ENCODE measurements at regions of chr6 and their contacts with region 1.

Region 1: DNA sequence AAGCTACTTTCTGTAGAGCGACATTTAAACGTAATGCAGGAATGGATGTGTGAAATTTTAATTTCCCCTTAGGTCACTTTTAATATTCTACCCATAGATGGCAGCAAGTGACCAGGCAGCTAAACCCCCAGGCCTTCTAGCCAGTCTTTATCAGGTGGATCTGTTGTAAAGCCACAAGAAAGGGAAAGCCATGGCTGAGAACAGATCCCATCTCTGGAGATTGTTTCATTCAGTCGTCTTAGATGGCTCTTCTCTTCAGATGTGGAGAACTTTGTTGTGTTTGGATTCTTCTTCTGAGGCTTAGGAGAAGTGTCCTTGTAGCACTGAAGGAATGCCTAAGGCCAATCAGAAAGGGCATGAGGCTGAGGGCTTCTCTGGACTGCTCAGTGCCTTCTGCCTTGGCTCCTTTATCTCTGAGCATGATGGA is 15.8 kb upstream of the RNF182 start:
- DNase-seq: peak; percentile 88
- H3K4me3 ChIP-seq: no peak overlapping the region
- H3K27ac ChIP-seq: peak overlapping the region; percentile 82
- H3K4me1 ChIP-seq: peaks cover 37% of the 10 kb centered on the region
- H3K27me3 ChIP-seq: no peaks in the 10 kb centered on the region
- CTCF ChIP-seq: peak; percentile 78

Region 2: DNA sequence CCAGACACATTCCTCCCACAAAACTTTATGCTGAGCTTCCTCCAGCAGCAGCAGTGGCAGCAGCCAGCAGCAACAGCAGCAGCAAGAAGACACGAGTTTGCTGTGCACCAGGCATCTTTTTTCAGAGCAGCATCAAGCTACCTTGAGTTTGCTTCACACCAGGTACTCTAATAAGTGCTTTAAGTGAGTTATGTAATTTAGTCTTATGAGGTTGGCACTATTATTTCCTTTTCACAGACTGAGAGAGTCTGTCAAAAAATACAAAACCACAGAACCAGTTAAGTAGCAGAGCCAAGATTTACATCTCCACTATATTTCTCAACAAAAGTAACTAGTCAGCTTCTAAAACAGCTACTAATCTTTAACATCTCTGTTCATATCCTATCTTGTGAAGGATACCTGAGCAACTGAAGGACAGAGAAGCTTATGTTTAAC is 221.0 kb before region 1 on chr6:
- CTCF ChIA-PET with region 1: no interaction called
- POLR2A ChIA-PET with region 1: no interaction called
- intact Hi-C with region 1: no loop called
- DNase-seq: no peak
- H3K4me3 ChIP-seq: no peak overlapping the region
- H3K27ac ChIP-seq: no peak overlapping the region
- H3K4me1 ChIP-seq: no peaks in the 10 kb centered on the region
- H3K27me3 ChIP-seq: no peaks in the 10 kb centered on the region
- CTCF ChIP-seq: no peak

Region 3: GRCh38 chr6:13795041-13795750 is 113.8 kb before region 1 on chr6:
- CTCF ChIA-PET with region 1: interaction called, 3 read pairs
- POLR2A ChIA-PET with region 1: no interaction called
- intact Hi-C with region 1: loop called (anchors 1 kb)
- DNase-seq: peak; percentile 92
- H3K4me3 ChIP-seq: peak overlapping the region; percentile 1
- H3K27ac ChIP-seq: peak overlapping the region; percentile 83
- H3K4me1 ChIP-seq: peaks cover 24% of the 10 kb centered on the region
- H3K27me3 ChIP-seq: no peaks in the 10 kb centered on the region
- CTCF ChIP-seq: peak; percentile 98

Region 4: GRCh38 chr6:14066782-14067406 is 157.9 kb after region 1 on chr6:
- CTCF ChIA-PET with region 1: interaction called, 28 read pairs
- POLR2A ChIA-PET with region 1: no interaction called
- intact Hi-C with region 1: loop called (anchors 1 kb)
- DNase-seq: peak; percentile 84
- H3K4me3 ChIP-seq: no peak overlapping the region
- H3K27ac ChIP-seq: no peak overlapping the region
- H3K4me1 ChIP-seq: no peaks in the 10 kb centered on the region
- H3K27me3 ChIP-seq: no peaks in the 10 kb centered on the region
- CTCF ChIP-seq: peak; percentile 75

Region 5: GRCh38 chr6:14210663-14211561 is 301.9 kb after region 1 on chr6:
- CTCF ChIA-PET with region 1: no interaction called
- POLR2A ChIA-PET with region 1: no interaction called
- intact Hi-C with region 1: loop called (anchors 2 kb)
- DNase-seq: peak; percentile 96
- H3K4me3 ChIP-seq: peak overlapping the region; percentile 54
- H3K27ac ChIP-seq: peak overlapping the region; percentile 91
- H3K4me1 ChIP-seq: peaks cover 38% of the 10 kb centered on the region
- H3K27me3 ChIP-seq: no peaks in the 10 kb centered on the region
- CTCF ChIP-seq: peak; percentile 47; the same call in 1 of the 2 replicates

Region 6: DNA sequence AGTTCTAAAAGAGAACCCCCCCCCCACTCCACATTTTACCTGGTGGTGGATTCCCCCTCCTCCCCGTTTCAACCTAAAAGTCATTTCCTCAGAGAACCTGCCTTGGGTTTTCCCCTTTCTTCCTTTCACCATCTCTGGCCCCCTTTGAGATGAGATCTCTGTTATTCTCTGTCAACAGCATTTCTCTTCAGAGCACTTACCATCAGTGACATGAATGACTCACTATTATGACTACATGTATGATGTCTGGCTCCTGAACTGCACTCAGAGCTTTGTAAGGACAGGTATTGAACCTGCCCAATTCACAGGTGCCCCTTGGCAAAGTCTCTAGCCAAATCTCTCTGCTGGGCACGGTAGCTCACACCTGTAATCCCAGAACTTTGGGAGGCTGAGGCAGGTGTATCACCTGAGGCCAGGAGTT is 1275.5 kb after region 1 on chr6:
- CTCF ChIA-PET with region 1: no interaction called
- POLR2A ChIA-PET with region 1: no interaction called
- intact Hi-C with region 1: loop called (anchors 10 kb)
- DNase-seq: peak; percentile 15
- H3K4me3 ChIP-seq: no peak overlapping the region
- H3K27ac ChIP-seq: peak overlapping the region; percentile 65
- H3K4me1 ChIP-seq: peaks cover 7% of the 10 kb centered on the region
- H3K27me3 ChIP-seq: no peaks in the 10 kb centered on the region
- CTCF ChIP-seq: no peak

Measured in A673 (cell line).